ENCODE measurements at regions of chr6 and their contacts with region 1.

Region 1: DNA sequence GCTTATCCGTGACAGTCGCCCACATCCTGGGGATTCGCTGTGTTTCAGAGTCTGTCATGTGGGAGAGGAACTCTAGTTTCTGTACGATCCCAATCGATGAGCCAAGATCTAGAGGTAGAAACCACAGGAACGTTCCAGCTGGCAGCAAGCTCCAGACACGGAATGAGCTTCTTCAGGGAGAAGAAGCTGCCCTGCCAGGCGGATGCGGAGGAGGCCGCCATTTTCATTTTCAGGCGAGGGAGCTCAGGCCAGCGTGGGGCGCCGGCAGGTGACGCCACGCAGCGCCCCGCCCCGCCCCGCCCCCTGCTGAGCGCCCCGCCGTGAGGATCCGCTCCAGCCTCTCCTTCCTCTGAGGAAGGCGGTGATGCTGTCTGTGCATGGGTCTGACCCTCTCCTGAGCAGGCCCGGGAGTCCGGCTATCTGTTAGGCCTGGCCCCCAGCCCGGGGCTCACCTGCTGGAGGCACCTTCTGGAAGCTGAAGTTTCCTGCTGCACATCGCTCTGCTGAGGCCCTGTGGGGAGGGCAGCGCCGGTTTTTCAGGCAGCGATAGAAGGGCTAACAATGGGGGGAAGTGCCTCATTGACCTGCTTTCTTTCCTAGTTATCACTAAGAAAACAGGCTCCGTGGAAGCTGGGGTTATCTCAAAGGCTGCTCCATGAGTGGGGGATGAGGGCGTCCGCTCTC is 147.5 kb downstream of the ERMARD start:
- DNase-seq: no peak
- H3K4me3 ChIP-seq: no peak overlapping the region
- CTCF ChIP-seq: no peak

Region 2: GRCh38 chr6:169940481-169941271 is 41.7 kb after region 1 on chr6:
- in situ Hi-C with region 1: loop called (anchors 10 kb)
- DNase-seq: no peak
- H3K4me3 ChIP-seq: no peak overlapping the region
- CTCF ChIP-seq: no peak

Region 3: DNA sequence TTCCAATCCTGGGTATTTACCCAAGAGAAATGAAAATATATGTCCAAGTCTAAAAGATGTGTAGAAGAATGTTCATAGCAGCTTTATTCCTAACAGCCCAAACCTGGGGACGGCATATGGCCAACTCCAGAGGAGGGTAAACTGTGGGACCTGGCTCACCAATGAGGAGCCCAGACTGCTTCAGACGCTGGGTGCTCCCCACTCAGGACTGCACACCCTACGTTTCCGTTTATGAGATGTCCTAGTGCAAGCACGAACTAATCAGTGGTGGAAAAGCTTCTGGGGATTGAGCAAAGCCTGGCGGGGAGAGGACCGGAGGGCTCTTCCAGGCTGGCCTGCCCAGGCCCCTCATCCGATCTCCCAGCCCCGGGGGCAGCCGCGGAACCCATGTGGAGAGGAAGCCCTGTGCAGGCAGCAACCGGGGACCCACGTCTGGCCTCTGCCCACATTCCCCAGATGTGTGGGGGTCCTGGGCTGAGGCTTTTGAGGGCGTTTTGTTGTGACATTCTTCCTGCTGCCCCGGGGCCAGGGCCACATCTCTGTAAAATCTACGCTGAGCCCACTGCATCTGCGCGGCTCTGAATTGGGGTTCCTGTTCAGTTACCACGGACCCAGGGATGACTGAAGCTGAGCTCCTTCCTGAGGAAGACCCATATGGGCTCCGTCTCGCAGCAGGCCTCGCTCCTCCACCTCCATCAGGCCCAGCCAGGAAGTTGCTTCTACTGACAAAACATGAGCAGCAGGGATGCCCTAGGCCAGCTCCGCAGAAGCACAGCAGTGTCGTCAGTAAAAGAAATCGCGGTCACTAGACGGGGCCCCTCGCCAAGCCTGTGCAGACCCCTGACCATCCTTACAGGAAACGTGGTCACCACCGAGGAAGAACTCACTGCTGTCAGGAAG is 203.9 kb after region 1 on chr6:
- in situ Hi-C with region 1: loop called (anchors 10 kb)
- DNase-seq: no peak
- H3K4me3 ChIP-seq: no peak overlapping the region
- CTCF ChIP-seq: no peak

Region 4: DNA sequence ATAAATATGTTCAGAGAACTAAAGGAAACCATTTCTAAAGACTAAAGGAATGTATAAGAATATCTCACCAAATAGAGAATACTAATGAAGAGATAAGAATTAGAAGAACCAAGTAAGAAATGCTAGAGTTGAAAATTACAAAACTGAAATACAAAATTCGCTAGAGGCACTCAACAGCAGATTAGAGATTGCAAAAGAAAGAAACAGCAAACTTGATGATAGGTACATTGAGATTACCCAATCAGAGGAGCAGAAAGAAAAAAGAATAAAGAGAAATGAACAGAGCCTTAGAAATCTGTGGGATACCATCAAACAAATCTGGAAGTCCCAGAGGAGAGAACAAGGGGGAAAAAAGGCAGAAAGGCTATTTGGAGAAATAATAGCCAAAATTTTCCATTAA is 691.8 kb after region 1 on chr6:
- in situ Hi-C with region 1: no loop called
- DNase-seq: no peak
- H3K4me3 ChIP-seq: no peak overlapping the region
- CTCF ChIP-seq: no peak

Measured in astrocyte of the cerebellum (primary cell).